Heart right ventricle (tissue), 16 donors: ENCODE measurements at regions of chr19 and their contacts with region 1.

Region 1: GRCh38 chr19:8389891-8390616 is at the start of gene RAB11B:
- DNase-seq: peak; percentile 99 to 100
- ATAC-seq: peak; percentile 88 to 95 (median 94)
- H3K4me3 ChIP-seq: peak within 1 kb of the TSS; percentile 66 to 100 (median 82)
- H3K27ac ChIP-seq: peak within 1 kb of the TSS; percentile 99 to 100 (median 100)
- H3K4me1 ChIP-seq: peaks cover 29 to 60% (median 48%) of the 10 kb centered on the region in 9 donors
- H3K27me3 ChIP-seq: no peaks in the 10 kb centered on the region
- CTCF ChIP-seq: no peak
- total RNA-seq, gene RAB11B: 140 to 178 (median 159) TPM

Region 2: GRCh38 chr19:8342684-8343482 is 47.2 kb before region 1 on chr19 and contains the start of gene KANK3:
- intact Hi-C with region 1: loop called in 1 of 10 experiments (anchors 10 kb)
- DNase-seq: peak; percentile 98 to 100
- ATAC-seq: peak; percentile 92 to 98 (median 94)
- H3K4me3 ChIP-seq: peak within 1 kb of the TSS; percentile 51 to 87 (median 70)
- H3K27ac ChIP-seq: peak within 1 kb of the TSS; percentile 90 to 99 (median 97)
- H3K4me1 ChIP-seq: peaks cover 0 to 53% (median 22%) of the 10 kb centered on the region in 9 donors
- H3K27me3 ChIP-seq: peaks cover 0 to 46% (median 0%) of the 10 kb centered on the region in 7 donors
- CTCF ChIP-seq: peak in 3 of 9 donors; percentile 14 to 16 (median 15)
- total RNA-seq, gene KANK3: 10.2 to 26.1 (median 16.7) TPM

Region 3: GRCh38 chr19:8363803-8364771 is 26.0 kb before region 1 on chr19 and contains the start of gene ANGPTL4:
- intact Hi-C with region 1: loop called in 5 of 10 experiments (anchors 1 to 5 kb)
- DNase-seq: peak; percentile 73 to 78
- ATAC-seq: peak; percentile 43 to 71 (median 64)
- H3K4me3 ChIP-seq: peak within 1 kb of the TSS; percentile 59 to 79 (median 66)
- H3K27ac ChIP-seq: peak within 1 kb of the TSS; percentile 26 to 93 (median 84)
- H3K4me1 ChIP-seq: peaks cover 17 to 77% (median 62%) of the 10 kb centered on the region in 9 donors
- H3K27me3 ChIP-seq: peaks cover 0 to 30% (median 0%) of the 10 kb centered on the region in 7 donors
- CTCF ChIP-seq: peak in 5 of 9 donors; percentile 29 to 45 (median 36)
- total RNA-seq, gene ANGPTL4: 1.5 to 154 (median 4.5) TPM

Region 4: GRCh38 chr19:8444645-8445487 is 54.8 kb after region 1 on chr19 and contains the start of gene HNRNPM:
- intact Hi-C with region 1: loop called in 1 of 10 experiments (anchors 5 kb)
- DNase-seq: peak; percentile 99 to 100
- ATAC-seq: peak; percentile 98 to 100 (median 99)
- H3K4me3 ChIP-seq: peak within 1 kb of the TSS; percentile 81 to 99 (median 90)
- H3K27ac ChIP-seq: peak within 1 kb of the TSS; percentile 90 to 99 (median 97)
- H3K4me1 ChIP-seq: peaks cover 23 to 48% (median 42%) of the 10 kb centered on the region in 9 donors
- H3K27me3 ChIP-seq: no peaks in the 10 kb centered on the region
- CTCF ChIP-seq: no peak
- total RNA-seq, gene HNRNPM: 87.4 to 127 (median 93.9) TPM

Region 5: DNA sequence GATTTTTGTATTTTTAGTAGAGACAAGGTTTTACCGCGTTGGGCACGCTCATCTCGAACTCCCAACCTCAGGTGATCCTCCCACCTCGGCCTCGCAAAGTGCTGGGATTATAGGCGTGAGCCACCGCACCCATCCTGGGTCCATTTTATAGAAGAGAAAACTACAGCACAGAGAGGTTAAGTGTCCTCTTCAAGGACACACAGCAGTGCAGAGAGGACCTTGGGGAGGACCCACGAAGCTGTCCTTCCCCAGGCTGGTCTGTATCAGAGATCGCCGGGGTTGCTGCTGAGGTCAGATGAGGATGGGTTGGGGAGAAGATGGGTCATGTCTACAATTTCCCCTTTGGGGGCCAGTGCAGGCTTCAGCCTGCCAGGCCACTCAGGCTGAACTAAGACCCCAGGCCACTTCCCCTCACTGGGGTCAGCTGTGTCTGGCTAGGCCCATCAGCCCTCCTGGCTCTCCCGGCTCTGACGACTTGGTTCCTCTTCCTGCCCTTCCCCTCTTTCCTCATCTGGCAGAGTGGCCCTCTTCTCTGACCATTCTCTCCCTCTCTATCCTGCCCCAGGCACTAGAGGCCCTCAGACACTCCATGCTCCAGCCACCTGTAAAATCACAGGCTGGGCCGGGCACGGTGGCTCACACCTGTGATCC is 177.6 kb after region 1 on chr19:
- intact Hi-C with region 1: no loop called
- DNase-seq: peak; percentile 27 to 44
- ATAC-seq: peak; percentile 35 to 84 (median 62)
- H3K4me3 ChIP-seq: peak overlapping the region in 1 of 10 donors; percentile 26
- H3K27ac ChIP-seq: peak overlapping the region in 2 of 10 donors; percentile 31 to 90
- H3K4me1 ChIP-seq: peaks cover 0 to 93% (median 0%) of the 10 kb centered on the region in 9 donors
- H3K27me3 ChIP-seq: no peaks in the 10 kb centered on the region
- CTCF ChIP-seq: no peak